ENCODE measurements at regions of chr20 and their contacts with region 1.

Region 1: GRCh38 chr20:45104786-45105185 is 3.9 kb upstream of the KCNS1 start:
- DNase-seq: peak; percentile 76
- ATAC-seq: peak; percentile 44; the same call in 1 of the 2 replicates
- H3K4me3 ChIP-seq: no peak overlapping the region
- H3K27ac ChIP-seq: no peak overlapping the region
- H3K4me1 ChIP-seq: no peaks in the 10 kb centered on the region
- H3K27me3 ChIP-seq: peaks cover 28% of the 10 kb centered on the region
- CTCF ChIP-seq: no peak
- POLR2A ChIP-seq: no peak
- RAD21 ChIP-seq: no peak

Region 2: GRCh38 chr20:45300961-45301360 is 196.2 kb after region 1 on chr20:
- CTCF ChIA-PET with region 1: interaction called, 13 read pairs
- POLR2A ChIA-PET with region 1: no interaction called
- dilution Hi-C with region 1: no loop called
- in situ Hi-C with region 1: loop called (anchors 25 kb)
- intact Hi-C with region 1: no loop called
- DNase-seq: peak; percentile 19
- ATAC-seq: peak; percentile 76
- H3K4me3 ChIP-seq: no peak overlapping the region
- H3K27ac ChIP-seq: no peak overlapping the region
- H3K4me1 ChIP-seq: no peaks in the 10 kb centered on the region
- H3K27me3 ChIP-seq: peaks cover 30% of the 10 kb centered on the region
- CTCF ChIP-seq: peak; percentile 33; the same call in 1 of the 2 replicates
- POLR2A ChIP-seq: no peak
- RAD21 ChIP-seq: no peak

Region 3: GRCh38 chr20:45576995-45577394 is 472.2 kb after region 1 on chr20:
- CTCF ChIA-PET with region 1: no interaction called
- POLR2A ChIA-PET with region 1: no interaction called
- dilution Hi-C with region 1: no loop called
- in situ Hi-C with region 1: no loop called
- intact Hi-C with region 1: no loop called
- DNase-seq: peak; percentile 1
- ATAC-seq: peak; percentile 35; the same call in 1 of the 2 replicates
- H3K4me3 ChIP-seq: no peak overlapping the region
- H3K27ac ChIP-seq: no peak overlapping the region
- H3K4me1 ChIP-seq: no peaks in the 10 kb centered on the region
- H3K27me3 ChIP-seq: no peaks in the 10 kb centered on the region
- CTCF ChIP-seq: no peak
- POLR2A ChIP-seq: no peak
- RAD21 ChIP-seq: no peak